Head of caudate nucleus (tissue), 42 donors: ENCODE measurements at regions of chr13 and their contacts with region 1.

Region 1: DNA sequence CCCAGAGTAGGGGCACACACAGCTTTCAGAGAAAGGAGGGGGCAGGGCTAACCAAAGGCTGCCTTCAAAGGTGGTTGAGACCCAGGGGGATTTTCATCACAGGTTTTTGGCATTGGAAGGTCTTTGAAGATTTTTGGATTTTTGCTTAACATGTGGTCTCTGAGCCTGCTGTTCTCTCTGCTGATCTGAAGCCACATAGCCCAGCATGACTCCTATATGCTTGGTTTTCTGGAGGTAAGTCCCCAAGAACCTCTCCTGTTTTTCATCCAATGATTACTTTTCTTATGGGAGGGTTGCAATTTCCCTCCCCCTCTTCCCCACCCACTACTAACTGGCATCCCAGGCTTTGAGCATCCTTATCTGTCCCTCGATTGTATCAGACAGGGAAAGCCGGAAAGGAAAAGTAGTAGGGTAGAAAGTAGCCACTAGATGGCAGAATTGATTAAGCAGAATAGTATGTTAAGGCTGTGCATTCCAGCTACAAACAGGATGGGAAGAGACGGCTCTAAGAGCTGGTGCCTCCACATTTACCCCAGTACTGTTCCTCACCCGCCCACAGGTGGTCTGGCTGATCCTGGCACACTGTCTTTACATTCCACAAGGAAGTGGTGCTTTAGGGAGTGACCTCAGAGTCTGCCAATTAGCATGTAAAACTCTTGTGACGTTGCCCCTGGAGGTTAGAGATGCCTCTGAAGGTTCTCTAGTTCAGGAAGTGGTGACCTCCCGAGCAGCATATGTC is 218.9 kb upstream of the EDNRB start:
- DNase-seq: peak in 21 of 42 donors; percentile 4 to 75 (median 27)

Region 2: DNA sequence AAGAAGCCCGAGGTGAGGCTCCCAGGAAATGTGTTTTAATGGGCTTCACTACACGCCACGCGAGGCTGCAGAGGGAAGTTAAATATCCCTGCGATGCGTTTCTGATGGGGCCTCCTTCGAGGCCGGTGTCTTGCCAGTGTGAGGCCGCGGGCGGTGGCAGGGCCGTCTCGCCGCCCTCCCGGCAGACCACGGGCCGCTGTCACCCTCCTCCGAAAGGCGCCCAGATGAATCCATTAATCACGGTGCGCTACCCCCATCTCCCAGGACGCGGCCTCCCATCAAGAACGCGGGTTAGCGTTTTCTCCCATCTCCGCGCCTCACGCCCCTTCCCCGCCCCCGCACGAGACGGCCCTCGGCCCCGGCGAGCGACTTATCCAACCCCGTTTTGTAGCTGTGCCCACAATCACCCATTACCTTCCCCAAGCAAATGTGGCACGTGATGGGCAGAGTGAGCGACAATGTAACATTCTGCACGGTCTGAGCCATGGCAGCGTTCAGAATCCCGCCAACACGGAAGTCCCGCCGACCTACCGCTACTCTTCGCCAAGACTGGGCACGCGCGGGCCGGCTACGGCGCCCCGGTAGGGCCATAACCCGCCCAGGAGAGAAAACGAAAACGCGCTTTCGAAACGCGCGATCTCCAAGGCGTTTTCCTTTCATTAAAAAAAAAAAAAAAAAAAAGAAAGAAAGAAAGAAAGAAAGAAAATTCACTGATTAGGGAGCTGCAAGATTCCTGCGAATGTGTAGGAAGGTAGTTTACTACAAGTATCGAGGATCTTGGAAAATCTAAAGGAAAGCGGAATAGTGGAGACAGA is 521.3 kb after region 1 on chr13 and contains the start of gene OBI1:
- intact Hi-C with region 1: loop called (anchors 10 kb)
- DNase-seq: peak; percentile 79 to 99 (median 96)

Region 3: GRCh38 chr13:78978381-78978998 is 840.9 kb after region 1 on chr13:
- intact Hi-C with region 1: loop called (anchors 5 kb)
- DNase-seq: peak in 26 of 42 donors; percentile 9 to 85 (median 51)